Common myeloid progenitor, CD34-positive (primary cell): ENCODE measurements at regions of chr2 and their contacts with region 1.

Region 1: GRCh38 chr2:9770308-9771100 is 72.8 kb upstream of the TAF1B start:
- DNase-seq: peak; percentile 46 to 73 (median 68)
- H3K4me3 ChIP-seq: no peak overlapping the region
- H3K27ac ChIP-seq: no peak overlapping the region
- H3K4me1 ChIP-seq: peaks cover 0 to 18% (median 4%) of the 10 kb centered on the region in 4 experiments
- H3K27me3 ChIP-seq: no peaks in the 10 kb centered on the region

Region 2: DNA sequence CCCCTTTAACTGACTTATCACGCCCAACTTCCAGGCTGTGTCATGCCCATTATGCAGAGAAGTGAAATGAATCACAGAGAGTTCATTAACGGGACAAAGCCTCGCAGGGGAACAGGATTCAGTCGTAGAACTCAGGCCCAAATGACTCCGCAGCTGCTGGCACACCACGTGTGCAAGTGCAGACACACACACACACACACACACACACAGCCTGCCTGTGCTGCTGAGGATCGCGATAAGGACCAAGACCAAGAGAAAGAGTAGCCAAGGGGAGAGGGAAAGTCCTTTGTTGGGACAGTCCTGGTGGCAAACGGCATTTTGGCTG is 17.3 kb before region 1 on chr2:
- CTCF ChIA-PET with region 1: interaction called, 53 read pairs
- POLR2A ChIA-PET with region 1: interaction called, 4 read pairs
- DNase-seq: peak in 2 of 3 donors; percentile 51 to 76
- H3K4me3 ChIP-seq: peak overlapping the region in 1 of 7 experiments; percentile 10
- H3K27ac ChIP-seq: no peak overlapping the region
- H3K4me1 ChIP-seq: peaks cover 0 to 53% (median 51%) of the 10 kb centered on the region in 4 experiments
- H3K27me3 ChIP-seq: no peaks in the 10 kb centered on the region

Region 3: GRCh38 chr2:9799665-9800632 is 29.4 kb after region 1 on chr2:
- CTCF ChIA-PET with region 1: interaction called, 15 read pairs
- POLR2A ChIA-PET with region 1: no interaction called
- DNase-seq: peak; percentile 67 to 82 (median 76)
- H3K4me3 ChIP-seq: peak overlapping the region in 6 of 7 experiments; percentile 8 to 62 (median 29)
- H3K27ac ChIP-seq: no peak overlapping the region
- H3K4me1 ChIP-seq: peaks cover 3 to 22% (median 13%) of the 10 kb centered on the region in 4 experiments
- H3K27me3 ChIP-seq: no peaks in the 10 kb centered on the region

Region 4: GRCh38 chr2:9843229-9844035 is 72.9 kb after region 1 on chr2 and contains the start of gene TAF1B:
- CTCF ChIA-PET with region 1: no interaction called
- POLR2A ChIA-PET with region 1: no interaction called
- DNase-seq: peak; percentile 95 to 98 (median 97)
- H3K4me3 ChIP-seq: peak within 1 kb of the TSS; percentile 72 to 95 (median 78)
- H3K27ac ChIP-seq: peak within 1 kb of the TSS in 1 of 2 experiments; percentile 74
- H3K4me1 ChIP-seq: peaks cover 8 to 21% (median 16%) of the 10 kb centered on the region in 4 experiments
- H3K27me3 ChIP-seq: no peaks in the 10 kb centered on the region